CD4-positive, alpha-beta memory T cell (primary cell): ENCODE measurements at regions of chr5 and their contacts with region 1.

Region 1: GRCh38 chr5:68287976-68288706 is 72.6 kb downstream of the PIK3R1 start:
- DNase-seq: peak; percentile 52 to 70 (median 62)
- H3K4me3 ChIP-seq: peak overlapping the region; percentile 55 to 64
- H3K4me3 Mint-ChIP-seq: peak overlapping the region; percentile 70 to 94 (median 91)
- H3K27ac ChIP-seq: peak overlapping the region; percentile 52
- H3K27ac Mint-ChIP-seq: peak overlapping the region; percentile 89 to 96 (median 94)
- H3K4me1 ChIP-seq: peaks cover 89% of the 10 kb centered on the region
- H3K4me1 Mint-ChIP-seq: peaks cover 75 to 94% (median 85%) of the 10 kb centered on the region in 4 donors
- H3K27me3 ChIP-seq: no peaks in the 10 kb centered on the region
- H3K27me3 Mint-ChIP-seq: no peaks in the 10 kb centered on the region

Region 2: DNA sequence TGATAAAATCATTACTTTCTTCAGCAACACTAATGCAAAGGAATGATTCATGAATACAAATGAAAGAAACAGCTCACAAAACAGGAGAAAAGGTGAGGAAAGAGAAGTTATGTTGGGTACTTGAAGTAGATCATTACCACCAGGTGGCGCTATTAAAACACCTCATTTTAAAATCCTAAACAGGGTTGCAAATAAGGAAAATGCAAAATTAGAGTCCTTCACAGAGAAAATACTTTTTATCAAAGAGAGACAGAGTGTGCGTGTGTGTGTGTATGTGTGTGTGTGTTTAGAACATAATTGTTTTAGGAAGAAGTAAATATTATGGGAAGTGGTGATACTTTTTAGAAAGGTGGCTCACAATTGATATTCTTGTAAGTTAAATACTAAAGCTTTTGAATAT is 1042.0 kb before region 1 on chr5:
- CTCF ChIA-PET with region 1: interaction called, 9 read pairs
- POLR2A ChIA-PET with region 1: no interaction called
- intact Hi-C with region 1: loop called (anchors 5 kb)
- DNase-seq: peak in 4 of 5 donors; percentile 60 to 67 (median 64)
- H3K4me3 ChIP-seq: no peak overlapping the region
- H3K4me3 Mint-ChIP-seq: no peak overlapping the region
- H3K27ac ChIP-seq: no peak overlapping the region
- H3K27ac Mint-ChIP-seq: no peak overlapping the region
- H3K4me1 ChIP-seq: peaks cover 18% of the 10 kb centered on the region
- H3K4me1 Mint-ChIP-seq: peaks cover 8 to 20% (median 11%) of the 10 kb centered on the region in 4 donors
- H3K27me3 ChIP-seq: no peaks in the 10 kb centered on the region
- H3K27me3 Mint-ChIP-seq: peaks cover 0 to 1% of the 10 kb centered on the region in 2 donors

Region 3: GRCh38 chr5:68272289-68272688 is 15.9 kb before region 1 on chr5:
- CTCF ChIA-PET with region 1: interaction called, 53 read pairs
- POLR2A ChIA-PET with region 1: interaction called, 16 read pairs
- intact Hi-C with region 1: no loop called
- DNase-seq: peak in 2 of 5 donors; percentile 44 to 50
- H3K4me3 ChIP-seq: no peak overlapping the region
- H3K4me3 Mint-ChIP-seq: peak overlapping the region in 4 of 8 donors; percentile 15 to 46 (median 22)
- H3K27ac ChIP-seq: no peak overlapping the region
- H3K27ac Mint-ChIP-seq: peak overlapping the region; percentile 56 to 99 (median 80)
- H3K4me1 ChIP-seq: peaks cover 97% of the 10 kb centered on the region
- H3K4me1 Mint-ChIP-seq: peaks cover 66 to 95% (median 81%) of the 10 kb centered on the region in 4 donors
- H3K27me3 ChIP-seq: no peaks in the 10 kb centered on the region
- H3K27me3 Mint-ChIP-seq: no peaks in the 10 kb centered on the region

Region 4: DNA sequence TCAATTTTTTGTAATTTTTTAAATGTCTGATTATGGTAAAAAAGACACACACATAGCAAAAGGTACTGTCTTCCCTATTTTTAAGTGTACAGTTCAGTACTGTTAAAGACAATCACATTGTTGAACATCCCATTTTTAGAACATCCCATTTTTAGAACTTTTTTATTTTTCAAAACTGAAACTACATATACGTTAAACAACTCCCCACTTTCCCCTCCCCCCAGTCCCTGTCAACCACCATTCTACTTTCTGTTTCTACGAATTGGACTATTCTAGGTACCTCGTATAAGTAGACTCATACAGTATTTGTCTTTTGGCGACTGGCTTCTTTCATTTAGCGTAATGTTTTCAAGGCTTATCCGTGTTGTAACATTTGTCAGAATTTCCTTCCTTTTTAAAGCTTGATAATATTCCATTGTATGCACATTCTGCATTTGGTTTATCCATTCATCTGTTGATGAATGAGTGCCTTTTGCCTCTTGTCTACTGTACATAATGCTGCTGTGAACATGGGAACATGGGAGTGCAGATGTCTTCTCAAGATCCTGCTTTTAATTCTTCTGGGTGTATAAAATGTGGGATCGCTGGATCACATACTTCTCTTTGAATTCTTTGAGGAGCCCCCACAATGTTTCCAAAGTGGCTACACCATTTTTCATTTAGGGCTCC is 81.5 kb after region 1 on chr5:
- CTCF ChIA-PET with region 1: no interaction called
- POLR2A ChIA-PET with region 1: no interaction called
- intact Hi-C with region 1: loop called (anchors 5 kb)
- DNase-seq: peak; percentile 43 to 61 (median 58)
- H3K4me3 ChIP-seq: peak overlapping the region in 1 of 2 donors; percentile 10
- H3K4me3 Mint-ChIP-seq: peak overlapping the region; percentile 37 to 86 (median 79)
- H3K27ac ChIP-seq: no peak overlapping the region
- H3K27ac Mint-ChIP-seq: peak overlapping the region in 6 of 7 donors; percentile 77 to 91 (median 88)
- H3K4me1 ChIP-seq: peaks cover 18% of the 10 kb centered on the region
- H3K4me1 Mint-ChIP-seq: peaks cover 19 to 40% (median 28%) of the 10 kb centered on the region in 4 donors
- H3K27me3 ChIP-seq: no peaks in the 10 kb centered on the region
- H3K27me3 Mint-ChIP-seq: no peaks in the 10 kb centered on the region

Region 5: DNA sequence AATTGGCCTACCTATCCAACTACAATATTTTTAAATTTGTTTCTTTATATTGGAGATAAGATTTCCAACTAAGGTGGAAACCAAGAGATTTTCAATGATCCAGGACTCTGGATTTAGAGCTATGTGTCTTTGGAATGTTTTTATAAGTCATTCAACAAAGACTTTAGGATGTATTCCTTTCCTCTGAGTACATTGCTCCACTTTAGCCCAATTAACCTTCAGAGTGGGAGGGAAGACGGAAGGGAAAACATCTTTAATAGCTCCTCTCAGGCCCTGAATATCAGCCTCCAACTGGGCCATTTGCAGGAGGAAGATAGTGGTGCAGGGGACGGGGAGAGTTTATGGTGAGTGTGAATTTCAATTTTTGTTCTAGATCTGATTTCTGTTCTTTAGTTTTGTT is 166.6 kb after region 1 on chr5:
- CTCF ChIA-PET with region 1: interaction called, 96 read pairs
- POLR2A ChIA-PET with region 1: interaction called, 24 read pairs
- intact Hi-C with region 1: no loop called
- DNase-seq: no peak
- H3K4me3 ChIP-seq: no peak overlapping the region
- H3K4me3 Mint-ChIP-seq: no peak overlapping the region
- H3K27ac ChIP-seq: no peak overlapping the region
- H3K27ac Mint-ChIP-seq: no peak overlapping the region
- H3K4me1 ChIP-seq: peaks cover 15% of the 10 kb centered on the region
- H3K4me1 Mint-ChIP-seq: peaks cover 9 to 16% (median 12%) of the 10 kb centered on the region in 4 donors
- H3K27me3 ChIP-seq: no peaks in the 10 kb centered on the region
- H3K27me3 Mint-ChIP-seq: no peaks in the 10 kb centered on the region

Region 6: GRCh38 chr5:68576805-68577204 is 288.7 kb after region 1 on chr5:
- CTCF ChIA-PET with region 1: no interaction called
- POLR2A ChIA-PET with region 1: no interaction called
- intact Hi-C with region 1: no loop called
- DNase-seq: no peak
- H3K4me3 ChIP-seq: no peak overlapping the region
- H3K4me3 Mint-ChIP-seq: no peak overlapping the region
- H3K27ac ChIP-seq: no peak overlapping the region
- H3K27ac Mint-ChIP-seq: no peak overlapping the region
- H3K4me1 ChIP-seq: no peaks in the 10 kb centered on the region
- H3K4me1 Mint-ChIP-seq: no peaks in the 10 kb centered on the region
- H3K27me3 ChIP-seq: no peaks in the 10 kb centered on the region
- H3K27me3 Mint-ChIP-seq: peaks cover 3 to 5% of the 10 kb centered on the region in 2 donors

Region 7: GRCh38 chr5:68962757-68963484 is 674.8 kb after region 1 on chr5:
- CTCF ChIA-PET with region 1: no interaction called
- POLR2A ChIA-PET with region 1: no interaction called
- intact Hi-C with region 1: loop called (anchors 2 kb)
- DNase-seq: no peak
- H3K4me3 ChIP-seq: no peak overlapping the region
- H3K4me3 Mint-ChIP-seq: no peak overlapping the region
- H3K27ac ChIP-seq: no peak overlapping the region
- H3K27ac Mint-ChIP-seq: peak overlapping the region in 1 of 7 donors; percentile 1
- H3K4me1 ChIP-seq: no peaks in the 10 kb centered on the region
- H3K4me1 Mint-ChIP-seq: peaks cover 0 to 4% (median 0%) of the 10 kb centered on the region in 4 donors
- H3K27me3 ChIP-seq: no peaks in the 10 kb centered on the region
- H3K27me3 Mint-ChIP-seq: peaks cover 0 to under 1% of the 10 kb centered on the region in 2 donors